ENCODE measurements at regions of chr2 and their contacts with region 1.

Region 1: GRCh38 chr2:55718165-55719008 is 24.7 kb upstream of the PNPT1 start:
- DNase-seq: peak; percentile 58 to 71
- ATAC-seq: peak; percentile 74 to 92; a peak in 5 of 6 replicates
- H3K4me3 ChIP-seq: no peak overlapping the region
- H3K27ac ChIP-seq: peak overlapping the region in 1 of 2 experiments; percentile 41; a peak in 3 of 6 replicates
- H3K4me1 ChIP-seq: 0 out of 3 replicates have a peak, but pooled peaks cover 2% of the 10 kb centered on the region
- CTCF ChIP-seq: peak; percentile 99
- EP300 ChIP-seq: no peak
- POLR2A ChIP-seq: no peak
- RAD21 ChIP-seq: peak; percentile 98

Region 2: DNA sequence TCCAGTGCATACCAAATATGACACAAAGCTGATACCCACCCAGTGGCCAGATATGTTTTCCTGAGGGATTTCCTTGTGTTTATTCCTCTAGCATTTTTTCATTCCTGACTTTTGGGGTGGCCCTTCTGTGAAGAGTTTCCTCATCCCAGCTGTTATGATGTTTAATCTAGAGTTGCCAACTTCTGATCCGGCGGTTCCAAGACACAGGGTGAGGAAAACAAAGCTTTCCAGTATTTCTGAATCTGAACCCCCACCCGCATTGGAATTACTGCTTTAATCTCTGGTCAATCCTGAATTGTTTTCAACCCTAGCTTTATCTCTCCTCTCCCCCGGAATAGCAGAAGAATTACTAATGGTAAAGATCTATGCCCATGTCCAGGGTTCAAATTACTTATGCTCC is 14.5 kb after region 1 on chr2:
- CTCF ChIA-PET with region 1: interaction called, 36 read pairs
- POLR2A ChIA-PET with region 1: no interaction called
- DNase-seq: no peak
- ATAC-seq: no peak
- H3K4me3 ChIP-seq: no peak overlapping the region
- H3K27ac ChIP-seq: no peak overlapping the region
- H3K4me1 ChIP-seq: no peaks in the 10 kb centered on the region
- CTCF ChIP-seq: no peak
- EP300 ChIP-seq: no peak
- POLR2A ChIP-seq: no peak
- RAD21 ChIP-seq: no peak

Region 3: DNA sequence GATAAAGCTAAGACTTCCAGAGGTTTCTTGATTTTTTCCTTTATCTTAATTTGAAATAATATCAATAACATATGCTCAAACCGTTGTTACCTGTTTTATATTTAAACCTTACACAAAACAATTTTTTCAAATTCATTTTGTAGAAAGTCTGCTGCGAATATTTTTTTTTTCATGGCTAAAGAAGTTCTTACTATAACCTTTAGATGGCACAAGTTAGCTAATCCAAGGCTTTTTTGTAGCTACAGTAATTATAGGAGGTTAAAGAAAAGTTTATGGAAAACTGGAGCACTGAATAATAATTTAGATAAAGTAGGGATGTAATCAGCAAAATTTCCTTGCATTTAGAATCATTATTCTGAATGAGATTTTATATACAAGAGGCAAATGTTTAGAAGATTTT is 53.2 kb after region 1 on chr2:
- CTCF ChIA-PET with region 1: interaction called, 16 read pairs
- POLR2A ChIA-PET with region 1: no interaction called
- DNase-seq: peak; percentile 33 to 53
- ATAC-seq: peak in 1 of 2 experiments; percentile 84; a peak in 3 of 6 replicates
- H3K4me3 ChIP-seq: no peak overlapping the region
- H3K27ac ChIP-seq: peak overlapping the region; percentile 65 to 78
- H3K4me1 ChIP-seq: peaks cover 15% of the 10 kb centered on the region
- CTCF ChIP-seq: peak; percentile 89
- EP300 ChIP-seq: no peak
- POLR2A ChIP-seq: no peak
- RAD21 ChIP-seq: peak; percentile 98

Region 4: DNA sequence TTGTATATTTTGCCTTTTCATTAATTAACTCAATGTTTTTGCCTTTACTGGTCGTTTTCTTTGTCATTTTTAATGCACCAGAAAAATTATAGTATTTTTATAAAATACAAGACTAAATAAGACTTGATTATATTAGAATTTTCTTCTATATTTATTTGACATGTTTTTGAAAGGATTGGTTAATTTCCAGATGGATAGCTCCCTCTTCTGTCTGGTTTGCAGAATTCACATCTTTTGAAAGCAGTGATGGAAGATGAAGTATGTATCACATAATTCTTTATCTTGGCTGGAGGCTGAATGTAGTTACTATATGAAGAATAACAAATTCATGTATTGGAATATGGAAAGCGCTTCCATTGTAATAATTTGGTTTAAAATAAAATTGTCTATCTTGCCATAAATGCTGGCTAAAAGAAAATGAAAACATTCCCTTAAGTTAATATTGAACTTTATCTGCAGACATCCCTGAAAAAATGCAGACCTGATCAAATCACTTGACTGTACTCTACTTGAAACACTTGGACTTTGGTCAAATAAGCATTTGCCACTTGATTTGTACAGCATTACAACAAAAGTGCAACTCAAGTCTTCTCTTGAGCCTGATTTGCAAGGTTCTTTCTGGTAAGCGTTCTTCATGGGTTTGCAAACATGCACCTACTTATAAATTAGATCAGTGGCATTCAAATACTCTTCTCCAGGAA is 291.5 kb after region 1 on chr2:
- CTCF ChIA-PET with region 1: interaction called, 55 read pairs
- POLR2A ChIA-PET with region 1: interaction called, 4 read pairs
- DNase-seq: peak; percentile 18 to 62
- ATAC-seq: peak in 1 of 2 experiments; percentile 66; a peak in 3 of 6 replicates
- H3K4me3 ChIP-seq: no peak overlapping the region
- H3K27ac ChIP-seq: peak overlapping the region in 1 of 2 experiments; percentile 40; a peak in 2 of 6 replicates
- H3K4me1 ChIP-seq: peaks cover 11% of the 10 kb centered on the region
- CTCF ChIP-seq: peak; percentile 93
- EP300 ChIP-seq: no peak
- POLR2A ChIP-seq: no peak
- RAD21 ChIP-seq: peak; percentile 94 to 95

Region 5: DNA sequence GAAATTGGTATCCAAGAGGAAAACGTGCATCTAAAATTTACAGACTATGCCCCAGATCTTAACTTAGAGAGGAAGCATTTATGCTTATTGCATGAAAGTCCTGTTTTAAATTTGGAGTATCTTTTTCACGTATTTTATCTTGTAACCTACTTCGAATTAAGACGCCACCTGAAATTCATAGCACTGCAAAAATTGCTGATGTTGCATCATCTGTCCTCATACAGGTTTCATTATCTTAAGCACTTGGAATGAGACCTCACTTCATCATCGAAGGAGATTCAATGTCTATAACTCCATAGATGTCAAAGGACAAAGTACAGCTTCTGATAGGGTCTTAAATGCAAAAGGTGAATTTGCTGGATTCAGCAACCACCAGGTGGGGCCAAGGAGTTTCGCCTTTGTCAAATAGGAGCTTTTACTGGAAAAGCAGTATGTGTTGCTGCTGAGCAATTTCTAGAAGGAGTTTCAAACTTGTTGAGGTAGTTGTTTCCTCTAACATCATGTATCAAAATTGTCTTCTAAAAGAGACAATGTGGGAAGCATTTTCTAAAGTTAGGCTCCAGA is 359.0 kb after region 1 on chr2:
- CTCF ChIA-PET with region 1: interaction called, 11 read pairs
- POLR2A ChIA-PET with region 1: no interaction called
- DNase-seq: peak; percentile 43 to 58
- ATAC-seq: peak in 1 of 2 experiments; percentile 73; a peak in 4 of 6 replicates
- H3K4me3 ChIP-seq: no peak overlapping the region
- H3K27ac ChIP-seq: no peak overlapping the region
- H3K4me1 ChIP-seq: no peaks in the 10 kb centered on the region
- CTCF ChIP-seq: peak; percentile 65
- EP300 ChIP-seq: no peak
- POLR2A ChIP-seq: no peak
- RAD21 ChIP-seq: peak; percentile 44 to 54; a peak in 4 of 5 replicates